Testis (tissue), 5 donors: ENCODE measurements at regions of chr7 and their contacts with region 1.

Region 1: GRCh38 chr7:107879400-107880035 is 11.5 kb upstream of the DLD start:
- DNase-seq: peak; percentile 71
- H3K4me3 ChIP-seq: no peak overlapping the region
- H3K27ac ChIP-seq: no peak overlapping the region
- H3K4me1 ChIP-seq: no peaks in the 10 kb centered on the region
- H3K27me3 ChIP-seq: no peaks in the 10 kb centered on the region
- CTCF ChIP-seq: peak; percentile 61 to 71 (median 69)
- POLR2A ChIP-seq: no peak

Region 2: GRCh38 chr7:107743567-107744344 is 135.8 kb before region 1 on chr7 and contains the start of gene CBLL1:
- intact Hi-C with region 1: loop called (anchors 10 kb)
- DNase-seq: peak; percentile 97
- H3K4me3 ChIP-seq: peak within 1 kb of the TSS; percentile 71 to 89
- H3K27ac ChIP-seq: peak within 1 kb of the TSS; percentile 93 to 99
- H3K4me1 ChIP-seq: peaks cover 18% of the 10 kb centered on the region
- H3K27me3 ChIP-seq: no peaks in the 10 kb centered on the region
- CTCF ChIP-seq: peak; percentile 64 to 83 (median 80)
- POLR2A ChIP-seq: no peak
- total RNA-seq, gene CBLL1: 29.2 to 42.6 TPM